Endothelial cell of umbilical vein (primary cell): ENCODE measurements at regions of chr14 and their contacts with region 1.

Region 1: DNA sequence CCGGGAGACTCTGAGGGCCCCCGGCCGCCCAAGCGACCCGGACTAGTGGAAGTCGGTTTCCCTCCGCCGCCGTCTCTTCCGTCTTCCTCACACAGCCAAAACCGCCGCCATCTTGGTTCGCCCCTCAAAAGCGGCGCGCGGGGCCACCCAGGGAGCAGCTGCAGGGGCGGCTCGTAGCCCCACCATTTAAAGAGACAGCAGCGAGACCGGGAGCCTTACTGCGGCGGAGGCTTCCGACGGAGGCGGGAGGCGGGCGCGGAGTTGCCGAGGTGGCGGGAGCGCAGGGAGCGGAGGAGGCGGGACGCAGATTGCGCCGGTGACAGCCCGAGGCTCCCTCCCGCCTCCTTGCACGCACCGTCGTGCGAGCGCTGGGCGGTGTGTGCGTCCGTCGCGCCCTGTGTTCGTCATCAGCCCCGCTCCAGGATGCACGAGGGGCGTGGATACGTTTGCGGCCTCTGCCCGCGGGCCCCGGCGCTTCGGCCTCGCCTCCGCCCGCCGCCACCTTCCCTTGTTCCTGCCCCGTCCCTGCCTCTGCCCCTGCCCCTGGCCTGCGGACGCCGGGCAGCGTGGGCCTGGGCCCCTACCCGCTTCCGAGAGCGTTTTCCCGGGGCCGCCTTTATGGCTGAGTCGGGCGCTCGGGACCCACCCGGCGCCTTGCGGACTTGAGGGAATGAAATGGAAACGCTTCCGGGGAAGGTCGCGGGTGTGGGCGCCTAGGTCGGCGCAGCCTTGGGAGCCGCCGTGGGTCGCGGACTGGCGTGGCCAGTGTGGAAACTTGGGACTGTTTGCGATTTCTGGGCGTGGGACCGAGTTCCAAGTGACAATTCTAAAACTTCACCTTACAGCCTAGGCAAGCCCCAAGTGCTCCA is at the start of gene PPP4R3A:
- DNase-seq: peak; percentile 96
- H3K4me3 ChIP-seq: peak within 1 kb of the TSS; percentile 56 to 97 (median 85)
- H3K27ac ChIP-seq: peak within 1 kb of the TSS; percentile 83
- H3K4me1 ChIP-seq: peaks cover 17% of the 10 kb centered on the region
- H3K27me3 ChIP-seq: no peaks in the 10 kb centered on the region
- CTCF ChIP-seq: no peak
- POLR2A ChIP-seq: peak; percentile 89
- total RNA-seq, gene PPP4R3A: 77.0 and 83.5 TPM in 2 replicates

Region 2: GRCh38 chr14:91573893-91574837 is 63.8 kb after region 1 on chr14:
- CTCF ChIA-PET with region 1: no interaction called
- POLR2A ChIA-PET with region 1: no interaction called
- dilution Hi-C with region 1: no loop called
- intact Hi-C with region 1: loop called (anchors 5 kb)
- DNase-seq: peak; percentile 3
- H3K4me3 ChIP-seq: peak overlapping the region in 2 of 3 experiments; percentile 4 to 5
- H3K27ac ChIP-seq: no peak overlapping the region
- H3K4me1 ChIP-seq: no peaks in the 10 kb centered on the region
- H3K27me3 ChIP-seq: peaks cover 18 to 22% of the 10 kb centered on the region in 2 experiments
- CTCF ChIP-seq: no peak
- POLR2A ChIP-seq: no peak

Region 3: DNA sequence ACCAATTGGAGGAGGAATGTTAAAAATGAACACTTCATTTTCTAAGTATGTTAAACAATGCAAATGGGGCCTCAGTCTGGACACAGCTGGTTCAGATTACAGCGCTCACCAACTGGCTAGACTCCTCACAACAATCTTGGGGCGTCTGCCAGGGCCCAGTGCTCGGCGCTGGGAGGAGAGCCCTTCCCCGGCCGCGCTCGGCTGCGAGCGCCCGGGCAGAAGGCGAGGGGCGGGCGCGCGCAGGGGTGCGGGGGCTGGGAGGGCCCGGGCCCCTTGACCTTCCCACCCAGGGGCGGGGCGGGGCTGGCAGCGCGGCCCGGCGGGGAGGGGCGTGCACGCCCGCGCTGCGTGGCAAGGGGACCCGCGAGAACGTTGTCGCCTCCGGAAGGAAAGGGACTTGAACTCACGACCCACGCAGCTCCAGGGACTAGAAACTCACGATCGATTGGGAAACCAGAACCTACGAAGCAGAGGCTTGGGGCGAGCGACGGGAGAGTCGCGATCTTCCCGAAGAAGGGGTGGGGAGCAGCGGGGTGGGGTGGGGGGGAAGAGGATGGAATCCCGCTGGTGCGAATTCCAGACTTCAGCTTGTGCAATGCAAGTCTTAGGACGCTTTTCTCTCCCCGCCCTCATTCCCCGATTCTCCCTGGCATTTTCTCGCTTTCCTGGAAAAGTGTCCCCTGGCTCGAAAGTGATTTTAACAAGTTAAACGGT is 437.2 kb after region 1 on chr14 and contains the start of gene FBLN5:
- CTCF ChIA-PET with region 1: no interaction called
- POLR2A ChIA-PET with region 1: no interaction called
- dilution Hi-C with region 1: no loop called
- intact Hi-C with region 1: loop called (anchors 1 kb)
- DNase-seq: peak; percentile 24
- H3K4me3 ChIP-seq: peak within 1 kb of the TSS; percentile 2 to 55 (median 48)
- H3K27ac ChIP-seq: no peak within 1 kb of the TSS
- H3K4me1 ChIP-seq: peaks cover 4% of the 10 kb centered on the region
- H3K27me3 ChIP-seq: peaks cover 0 to 17% of the 10 kb centered on the region in 2 experiments
- CTCF ChIP-seq: no peak
- POLR2A ChIP-seq: peak; percentile 18
- total RNA-seq, gene FBLN5: 27.6 and 44.9 TPM in 2 replicates

Region 4: GRCh38 chr14:92039719-92040430 is 529.5 kb after region 1 on chr14 and contains the start of gene TRIP11:
- CTCF ChIA-PET with region 1: no interaction called
- POLR2A ChIA-PET with region 1: no interaction called
- dilution Hi-C with region 1: no loop called
- intact Hi-C with region 1: loop called (anchors 1 kb)
- DNase-seq: peak; percentile 94
- H3K4me3 ChIP-seq: peak within 1 kb of the TSS; percentile 67 to 96 (median 73)
- H3K27ac ChIP-seq: peak within 1 kb of the TSS; percentile 92
- H3K4me1 ChIP-seq: peaks cover 16% of the 10 kb centered on the region
- H3K27me3 ChIP-seq: no peaks in the 10 kb centered on the region
- CTCF ChIP-seq: no peak
- POLR2A ChIP-seq: peak; percentile 91
- total RNA-seq, gene TRIP11: 51.7 and 58.0 TPM in 2 replicates

Region 5: GRCh38 chr14:92121670-92122350 is 611.4 kb after region 1 on chr14 and contains the starts of genes CPSF2 and NDUFB1:
- CTCF ChIA-PET with region 1: no interaction called
- POLR2A ChIA-PET with region 1: no interaction called
- dilution Hi-C with region 1: no loop called
- intact Hi-C with region 1: loop called (anchors 1 kb)
- DNase-seq: peak; percentile 84
- H3K4me3 ChIP-seq: peak within 1 kb of the TSS; percentile 40 to 89 (median 79)
- H3K27ac ChIP-seq: peak within 1 kb of the TSS; percentile 75
- H3K4me1 ChIP-seq: peaks cover 7% of the 10 kb centered on the region
- H3K27me3 ChIP-seq: no peaks in the 10 kb centered on the region
- CTCF ChIP-seq: no peak
- POLR2A ChIP-seq: peak; percentile 95
- total RNA-seq, gene CPSF2: 76.9 and 81.7 TPM in 2 replicates
- total RNA-seq, gene NDUFB1: 95.2 and 114 TPM in 2 replicates

Region 6: DNA sequence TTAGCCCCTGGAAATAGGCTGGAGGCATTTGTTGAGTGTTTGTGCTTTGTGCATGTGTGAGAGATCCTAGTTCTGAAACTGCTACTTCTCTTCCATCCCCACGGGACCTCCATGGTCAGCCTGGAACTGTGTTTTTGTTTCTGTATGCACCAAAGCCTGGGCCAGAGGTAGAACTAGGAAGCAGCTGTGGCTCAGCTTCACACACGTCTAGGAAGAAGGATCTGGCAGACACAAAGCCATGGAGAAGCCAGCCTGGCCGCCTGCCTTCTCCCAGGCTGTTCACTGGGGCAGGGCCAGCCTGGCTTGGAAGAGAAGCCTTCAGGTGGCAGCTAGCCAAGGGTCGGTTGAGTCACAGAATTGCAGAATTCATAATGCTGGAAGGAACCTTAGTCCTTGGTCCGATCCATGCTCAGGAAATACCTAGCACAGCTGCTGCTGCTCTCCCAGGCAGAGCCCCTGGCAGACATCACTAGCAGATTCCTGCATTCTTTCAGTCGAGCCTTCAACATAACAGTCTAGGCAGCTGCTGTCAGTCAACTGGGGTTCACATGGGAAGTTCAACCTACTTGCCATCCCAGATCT is 1030.2 kb after region 1 on chr14:
- CTCF ChIA-PET with region 1: no interaction called
- POLR2A ChIA-PET with region 1: no interaction called
- dilution Hi-C with region 1: no loop called
- intact Hi-C with region 1: loop called (anchors 5 kb)
- DNase-seq: peak; percentile 99
- H3K4me3 ChIP-seq: no peak overlapping the region
- H3K27ac ChIP-seq: peak overlapping the region; percentile 98
- H3K4me1 ChIP-seq: peaks cover 24% of the 10 kb centered on the region
- H3K27me3 ChIP-seq: no peaks in the 10 kb centered on the region
- CTCF ChIP-seq: no peak
- POLR2A ChIP-seq: peak; percentile 72

Region 7: DNA sequence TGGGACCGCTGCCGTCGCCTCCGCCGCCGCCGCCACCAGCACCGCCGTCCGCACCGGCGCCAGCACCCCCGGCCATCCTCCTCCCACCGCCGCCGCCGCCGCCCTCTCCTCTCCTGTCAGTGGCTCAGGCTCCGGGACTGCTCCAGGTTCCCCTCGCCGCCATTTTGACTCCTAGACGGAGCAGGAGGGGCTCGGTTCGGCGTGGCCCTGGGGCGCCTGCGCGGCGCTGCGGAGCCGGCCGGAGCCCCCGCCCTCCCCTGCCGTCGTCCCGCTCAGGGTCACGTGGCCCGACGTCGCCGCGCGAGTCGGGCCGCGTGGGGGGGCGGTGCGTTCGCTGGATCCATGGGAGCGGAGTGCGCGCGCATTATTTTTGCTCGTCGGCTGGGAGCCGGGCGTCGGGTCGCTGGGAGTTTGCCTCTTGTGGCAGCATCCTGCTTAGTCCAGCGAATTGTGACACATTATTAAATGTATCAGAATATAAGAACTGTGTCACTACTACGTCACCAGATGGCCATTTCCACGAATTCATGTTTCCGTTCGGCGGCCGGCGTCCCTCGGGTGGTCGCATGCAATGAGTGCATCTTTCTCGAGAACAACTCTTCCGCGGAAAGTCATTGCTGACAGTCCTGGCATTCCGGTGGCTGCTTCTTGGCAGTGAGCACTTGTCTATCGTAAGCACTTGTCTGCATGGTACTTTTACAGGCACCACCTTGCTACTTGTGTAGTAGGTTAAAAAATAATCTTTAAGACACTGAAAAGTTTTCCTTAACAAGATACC is 1822.6 kb after region 1 on chr14 and contains the start of gene BTBD7:
- CTCF ChIA-PET with region 1: no interaction called
- POLR2A ChIA-PET with region 1: no interaction called
- dilution Hi-C with region 1: no loop called
- intact Hi-C with region 1: loop called (anchors 2 kb)
- DNase-seq: peak; percentile 97
- H3K4me3 ChIP-seq: peak within 1 kb of the TSS; percentile 82 to 95 (median 94)
- H3K27ac ChIP-seq: peak within 1 kb of the TSS; percentile 82
- H3K4me1 ChIP-seq: peaks cover 26% of the 10 kb centered on the region
- H3K27me3 ChIP-seq: no peaks in the 10 kb centered on the region
- CTCF ChIP-seq: peak in 1 of 2 donors; percentile 19
- POLR2A ChIP-seq: peak; percentile 63
- total RNA-seq, gene BTBD7: 47.8 and 50.2 TPM in 2 replicates